ENCODE measurements at regions of chr3 and their contacts with region 1.

Region 1: DNA sequence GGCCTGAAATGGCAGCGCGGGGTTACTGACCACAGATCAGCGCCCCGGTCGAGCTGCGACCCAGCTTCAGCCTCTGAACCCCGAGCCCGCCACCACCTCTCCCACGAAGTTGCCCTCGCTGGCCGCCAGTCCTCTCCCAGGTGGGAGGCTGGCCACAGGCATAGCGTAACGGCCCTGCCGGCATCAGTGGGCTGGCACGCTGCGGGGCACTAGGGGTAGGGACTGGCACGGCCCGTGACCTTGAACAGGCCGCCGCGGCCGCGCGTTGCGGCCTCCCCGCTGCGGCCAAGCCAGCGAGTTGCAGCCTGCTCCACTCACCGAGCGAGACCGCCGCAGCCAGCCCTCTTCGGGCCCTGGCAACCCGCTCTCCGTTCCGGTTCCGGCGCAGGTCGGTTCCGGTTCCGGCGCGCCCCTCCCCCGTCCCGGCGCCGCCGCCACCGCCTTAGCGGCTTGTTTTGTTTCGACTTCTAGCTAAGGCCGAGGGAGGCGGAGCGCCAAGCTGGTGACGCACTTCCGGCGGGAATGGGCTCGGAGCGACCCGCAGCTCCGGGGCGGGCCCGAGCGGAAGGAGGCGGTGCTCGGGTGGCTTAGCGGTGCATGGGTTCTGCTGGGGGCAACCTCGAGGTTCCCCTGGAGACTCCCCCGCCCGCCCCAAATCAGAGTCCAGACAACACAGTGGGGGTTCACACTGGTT is at the start of gene USP19:
- DNase-seq: peak; percentile 95
- ATAC-seq: peak; percentile 93
- H3K4me3 Mint-ChIP-seq: peak within 1 kb of the TSS; percentile 84
- H3K27ac Mint-ChIP-seq: peak within 1 kb of the TSS; percentile 79
- H3K4me1 Mint-ChIP-seq: peaks cover 17% of the 10 kb centered on the region
- H3K27me3 Mint-ChIP-seq: no peaks in the 10 kb centered on the region
- CTCF ChIP-seq: no peak
- total RNA-seq, gene USP19: 62.0 and 75.3 TPM in 2 replicates

Region 2: GRCh38 chr3:49007068-49007770 is 113.4 kb before region 1 on chr3 and contains the start of gene WDR6:
- CTCF ChIA-PET with region 1: no interaction called
- POLR2A ChIA-PET with region 1: interaction called, 10 read pairs
- intact Hi-C with region 1: loop called (anchors 1 kb)
- DNase-seq: peak; percentile 91
- ATAC-seq: peak; percentile 89
- H3K4me3 Mint-ChIP-seq: peak within 1 kb of the TSS; percentile 100
- H3K27ac Mint-ChIP-seq: peak within 1 kb of the TSS; percentile 99
- H3K4me1 Mint-ChIP-seq: peaks cover 21% of the 10 kb centered on the region
- H3K27me3 Mint-ChIP-seq: no peaks in the 10 kb centered on the region
- CTCF ChIP-seq: no peak
- total RNA-seq, gene WDR6: 205 and 250 TPM in 2 replicates

Region 3: DNA sequence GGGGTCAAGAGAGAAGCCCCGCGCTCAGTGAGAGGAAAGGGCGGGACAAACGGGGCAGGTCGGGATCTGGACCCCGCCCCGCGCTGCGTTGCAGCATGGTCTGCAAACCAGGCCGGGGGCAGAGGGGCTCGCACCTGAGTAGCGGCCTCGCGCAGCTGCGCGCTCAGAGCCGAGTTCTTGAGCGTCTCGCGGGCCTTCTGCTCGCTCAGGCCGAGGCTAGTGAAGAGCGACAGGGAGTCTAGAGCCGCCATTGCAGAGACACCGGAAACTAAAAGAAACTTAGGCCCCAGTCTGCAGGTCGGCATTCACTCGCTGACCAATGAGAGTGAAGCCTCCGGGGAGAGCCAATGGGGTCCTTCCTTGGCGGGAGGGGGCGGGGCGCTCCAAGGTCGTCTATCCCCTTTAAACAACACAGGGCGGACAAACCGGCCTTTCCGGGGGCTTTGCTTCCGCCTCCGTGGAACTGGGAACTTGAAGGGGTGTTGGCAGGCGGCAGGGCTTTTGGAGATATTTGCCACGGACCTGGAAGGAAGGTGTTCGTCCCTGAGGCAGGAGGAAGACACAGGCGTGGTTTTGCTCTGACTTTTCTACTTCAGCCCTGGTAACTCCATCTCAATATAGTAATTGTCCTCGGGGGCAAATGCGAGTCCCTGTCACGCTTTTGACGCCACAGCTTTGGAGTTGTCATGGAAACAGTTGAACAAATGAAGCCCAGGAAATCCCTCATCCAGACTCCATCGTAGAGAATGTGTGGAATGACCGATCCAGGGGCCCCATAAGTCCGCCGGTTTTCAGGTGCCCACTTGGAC is 15.9 kb before region 1 on chr3 and contains the start of gene QARS1:
- CTCF ChIA-PET with region 1: no interaction called
- POLR2A ChIA-PET with region 1: interaction called, 9 read pairs
- intact Hi-C with region 1: loop called (anchors 1 kb)
- DNase-seq: peak; percentile 77
- ATAC-seq: peak; percentile 99
- H3K4me3 Mint-ChIP-seq: peak within 1 kb of the TSS; percentile 98
- H3K27ac Mint-ChIP-seq: peak within 1 kb of the TSS; percentile 97
- H3K4me1 Mint-ChIP-seq: peaks cover 28% of the 10 kb centered on the region
- H3K27me3 Mint-ChIP-seq: no peaks in the 10 kb centered on the region
- CTCF ChIP-seq: no peak
- total RNA-seq, gene QARS1: 321 and 342 TPM in 2 replicates

Region 4: DNA sequence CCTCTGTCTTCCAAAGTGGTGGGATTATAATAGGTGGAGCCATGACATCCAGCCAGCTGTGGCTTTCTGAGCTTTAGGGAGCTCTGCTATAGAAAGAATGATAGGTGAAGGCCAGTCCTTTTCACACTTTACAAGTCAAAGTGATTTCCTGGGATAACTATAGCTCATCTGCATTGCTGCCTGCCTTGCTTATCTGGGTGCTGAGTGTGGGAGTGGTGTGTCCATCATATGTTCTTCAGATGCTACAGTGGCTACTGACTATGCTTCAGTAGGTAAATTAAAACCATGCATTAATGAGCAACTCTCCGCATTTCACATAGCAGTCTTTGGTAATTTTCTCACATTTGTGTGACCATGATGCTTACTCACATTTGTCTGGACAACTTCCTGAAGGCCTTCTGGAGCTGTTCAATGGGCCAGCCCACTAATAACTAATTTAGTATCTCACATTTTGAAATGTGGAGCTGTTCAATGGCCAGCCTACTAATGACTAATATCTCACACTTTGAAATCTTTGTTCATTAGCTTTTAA is 267.8 kb after region 1 on chr3:
- CTCF ChIA-PET with region 1: no interaction called
- POLR2A ChIA-PET with region 1: interaction called, 10 read pairs
- intact Hi-C with region 1: no loop called
- DNase-seq: no peak
- ATAC-seq: no peak
- H3K4me3 Mint-ChIP-seq: no peak overlapping the region
- H3K27ac Mint-ChIP-seq: peak overlapping the region; percentile 66
- H3K4me1 Mint-ChIP-seq: peaks cover 65% of the 10 kb centered on the region
- H3K27me3 Mint-ChIP-seq: no peaks in the 10 kb centered on the region
- CTCF ChIP-seq: no peak

Measured in activated B cell treated with CpG ODN at 0.5 μM for 24 hours (primary cell).